WTC11 (cell line): ENCODE measurements at regions of chr1 and their contacts with region 1.

Region 1: GRCh38 chr1:15937706-15938168 is 38.2 kb downstream of the ZBTB17 start:
- DNase-seq: peak; percentile 56
- ATAC-seq: peak; percentile 85
- H3K4me3 Mint-ChIP-seq: no peak overlapping the region
- H3K27ac Mint-ChIP-seq: peak overlapping the region; percentile 81
- H3K4me1 Mint-ChIP-seq: peaks cover 6% of the 10 kb centered on the region
- H3K27me3 Mint-ChIP-seq: no peaks in the 10 kb centered on the region
- CTCF ChIP-seq: no peak

Region 2: GRCh38 chr1:15949453-15950245 is 11.9 kb after region 1 on chr1:
- CTCF ChIA-PET with region 1: interaction called, 13 read pairs
- POLR2A ChIA-PET with region 1: interaction called, 3 read pairs
- DNase-seq: peak; percentile 55
- ATAC-seq: peak; percentile 52
- H3K4me3 Mint-ChIP-seq: no peak overlapping the region
- H3K27ac Mint-ChIP-seq: peak overlapping the region; percentile 87
- H3K4me1 Mint-ChIP-seq: peaks cover 63% of the 10 kb centered on the region
- H3K27me3 Mint-ChIP-seq: no peaks in the 10 kb centered on the region
- CTCF ChIP-seq: no peak